A549 (cell line): ENCODE measurements at regions of chr2 and their contacts with region 1.

Region 1: DNA sequence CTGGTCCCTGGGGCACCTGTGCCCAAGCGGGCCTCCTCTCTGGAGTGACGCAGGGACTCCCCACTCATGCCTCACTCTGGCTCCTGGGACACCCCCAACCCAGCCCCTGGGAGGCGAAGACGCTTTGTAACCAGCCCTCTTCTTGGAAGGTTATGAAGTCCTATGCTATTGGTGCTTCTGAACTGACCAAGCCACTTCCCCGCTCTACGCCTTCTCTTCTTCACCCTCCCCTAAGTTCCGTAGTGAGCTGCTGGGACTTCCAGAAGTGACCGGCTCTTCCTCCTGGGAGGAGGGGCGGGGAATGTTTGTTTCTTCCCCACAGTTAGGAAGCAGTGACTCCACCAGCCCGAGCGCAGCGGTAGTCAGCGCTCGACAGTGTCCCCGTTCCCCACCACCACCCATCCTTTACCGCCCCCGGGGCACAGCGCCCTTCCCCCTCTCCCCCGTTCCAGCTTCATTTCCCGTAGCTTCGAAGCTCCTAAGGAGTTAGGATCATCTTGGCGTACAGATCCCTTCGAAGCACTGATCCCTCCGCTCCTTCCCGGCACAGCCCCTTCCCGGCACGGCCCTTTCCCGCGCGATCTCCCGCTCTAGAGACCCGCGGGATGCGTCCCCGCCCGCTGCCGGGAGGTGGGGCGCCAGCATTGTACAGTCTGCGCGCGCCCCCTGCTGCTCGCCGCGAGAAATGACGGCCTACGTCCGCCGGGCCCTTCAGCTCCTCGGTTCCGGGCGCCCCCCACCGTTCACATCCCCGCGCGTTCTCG is 25.3 kb upstream of the NOTO start:
- DNase-seq: peak; percentile 87 to 95
- ATAC-seq: peak; percentile 86 to 96
- H3K4me3 ChIP-seq: peak overlapping the region; percentile 50
- H3K27ac ChIP-seq: peak overlapping the region; percentile 67 to 86
- H3K4me1 ChIP-seq: peaks cover 11% of the 10 kb centered on the region
- CTCF ChIP-seq: peak; percentile 99
- EP300 ChIP-seq: no peak
- POLR2A ChIP-seq: 0 out of 2 replicates have a peak, but pooled peaks have one; percentile 18
- RAD21 ChIP-seq: peak; percentile 90 to 98

Region 2: DNA sequence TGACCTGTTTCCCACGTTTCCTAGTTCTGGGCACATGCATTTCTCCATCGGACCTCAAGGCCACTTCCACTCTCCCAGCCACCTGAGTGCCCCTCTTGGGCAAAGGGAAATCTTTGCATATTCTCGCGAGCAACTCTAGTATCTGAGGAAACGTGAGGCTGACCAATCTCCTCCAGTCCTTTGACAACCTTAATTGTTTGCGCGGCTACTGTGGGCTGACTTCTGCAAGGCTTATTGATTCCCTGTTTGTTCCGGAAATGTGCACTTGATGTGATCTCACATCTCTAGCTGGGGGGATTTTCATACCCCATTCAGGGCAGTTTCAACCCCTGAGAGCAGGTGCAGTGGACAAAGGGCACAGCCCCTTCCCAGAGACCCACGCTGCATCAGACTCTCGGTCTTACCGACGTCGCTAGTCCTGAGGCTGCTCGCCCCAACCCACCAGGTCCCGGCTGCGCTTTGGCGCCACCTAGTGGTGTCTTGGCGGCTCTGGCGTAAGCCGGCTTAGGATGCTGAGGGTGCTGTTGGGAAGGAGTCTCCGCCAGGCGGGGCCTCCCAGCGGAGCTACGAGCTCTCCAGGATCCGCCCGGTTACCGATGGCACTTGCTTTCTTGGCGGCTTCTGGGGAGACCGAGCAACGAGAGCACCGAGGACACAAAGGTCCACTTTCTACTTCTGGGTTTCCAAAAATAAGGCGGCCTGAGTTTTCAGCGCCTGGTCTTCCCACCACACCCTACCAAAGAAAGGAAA is 314.6 kb before region 1 on chr2:
- CTCF ChIA-PET with region 1: interaction called, 10 read pairs
- POLR2A ChIA-PET with region 1: no interaction called
- DNase-seq: peak; percentile 93 to 97
- ATAC-seq: peak; percentile 97 to 99
- H3K4me3 ChIP-seq: peak overlapping the region; percentile 41
- H3K27ac ChIP-seq: peak overlapping the region; percentile 12 to 58; a peak in 2 of 6 replicates
- H3K4me1 ChIP-seq: peaks cover 10% of the 10 kb centered on the region; the same call in 2 of the 3 replicates
- CTCF ChIP-seq: peak; percentile 99
- EP300 ChIP-seq: no peak
- POLR2A ChIP-seq: no peak
- RAD21 ChIP-seq: peak; percentile 88

Region 3: GRCh38 chr2:72963423-72964145 is 213.5 kb before region 1 on chr2:
- CTCF ChIA-PET with region 1: interaction called, 10 read pairs
- POLR2A ChIA-PET with region 1: no interaction called
- DNase-seq: no peak
- ATAC-seq: peak in 1 of 2 experiments; percentile 19; a peak in 3 of 6 replicates
- H3K4me3 ChIP-seq: no peak overlapping the region
- H3K27ac ChIP-seq: no peak overlapping the region
- H3K4me1 ChIP-seq: no peaks in the 10 kb centered on the region
- CTCF ChIP-seq: no peak
- EP300 ChIP-seq: no peak
- POLR2A ChIP-seq: no peak
- RAD21 ChIP-seq: no peak

Region 4: GRCh38 chr2:72999729-73000725 is 177.0 kb before region 1 on chr2:
- CTCF ChIA-PET with region 1: interaction called, 39 read pairs
- POLR2A ChIA-PET with region 1: no interaction called
- DNase-seq: no peak
- ATAC-seq: peak in 1 of 2 experiments; percentile 28; a peak in 1 of 6 replicates
- H3K4me3 ChIP-seq: no peak overlapping the region
- H3K27ac ChIP-seq: peak overlapping the region in 1 of 2 experiments; percentile 47; a peak in 2 of 6 replicates
- H3K4me1 ChIP-seq: peaks cover 18% of the 10 kb centered on the region
- CTCF ChIP-seq: no peak
- EP300 ChIP-seq: no peak
- POLR2A ChIP-seq: no peak
- RAD21 ChIP-seq: no peak

Region 5: GRCh38 chr2:73156539-73157124 is 20.4 kb before region 1 on chr2:
- CTCF ChIA-PET with region 1: interaction called, 60 read pairs
- POLR2A ChIA-PET with region 1: no interaction called
- DNase-seq: peak; percentile 58 to 69
- ATAC-seq: peak; percentile 96 to 98
- H3K4me3 ChIP-seq: 0 out of 3 replicates have a peak overlapping the region, but pooled peaks have one; percentile 5
- H3K27ac ChIP-seq: peak overlapping the region in 1 of 2 experiments; percentile 65; a peak in 2 of 6 replicates
- H3K4me1 ChIP-seq: peaks cover 4% of the 10 kb centered on the region; the same call in 1 of the 3 replicates
- CTCF ChIP-seq: peak; percentile 93
- EP300 ChIP-seq: no peak
- POLR2A ChIP-seq: no peak
- RAD21 ChIP-seq: peak; percentile 96 to 97

Region 6: GRCh38 chr2:73202156-73203054 is 25.3 kb after region 1 on chr2 and contains the start of gene NOTO:
- CTCF ChIA-PET with region 1: interaction called, 173 read pairs
- POLR2A ChIA-PET with region 1: no interaction called
- DNase-seq: no peak
- ATAC-seq: peak; percentile 66 to 71
- H3K4me3 ChIP-seq: peak within 1 kb of the TSS; percentile 41
- H3K27ac ChIP-seq: peak within 1 kb of the TSS in 1 of 2 experiments; percentile 46; a peak in 3 of 6 replicates
- H3K4me1 ChIP-seq: peaks cover 12% of the 10 kb centered on the region
- CTCF ChIP-seq: no peak
- EP300 ChIP-seq: no peak
- POLR2A ChIP-seq: no peak
- RAD21 ChIP-seq: no peak
- polyA plus RNA-seq, gene NOTO: not detected in 2 replicates

Region 7: DNA sequence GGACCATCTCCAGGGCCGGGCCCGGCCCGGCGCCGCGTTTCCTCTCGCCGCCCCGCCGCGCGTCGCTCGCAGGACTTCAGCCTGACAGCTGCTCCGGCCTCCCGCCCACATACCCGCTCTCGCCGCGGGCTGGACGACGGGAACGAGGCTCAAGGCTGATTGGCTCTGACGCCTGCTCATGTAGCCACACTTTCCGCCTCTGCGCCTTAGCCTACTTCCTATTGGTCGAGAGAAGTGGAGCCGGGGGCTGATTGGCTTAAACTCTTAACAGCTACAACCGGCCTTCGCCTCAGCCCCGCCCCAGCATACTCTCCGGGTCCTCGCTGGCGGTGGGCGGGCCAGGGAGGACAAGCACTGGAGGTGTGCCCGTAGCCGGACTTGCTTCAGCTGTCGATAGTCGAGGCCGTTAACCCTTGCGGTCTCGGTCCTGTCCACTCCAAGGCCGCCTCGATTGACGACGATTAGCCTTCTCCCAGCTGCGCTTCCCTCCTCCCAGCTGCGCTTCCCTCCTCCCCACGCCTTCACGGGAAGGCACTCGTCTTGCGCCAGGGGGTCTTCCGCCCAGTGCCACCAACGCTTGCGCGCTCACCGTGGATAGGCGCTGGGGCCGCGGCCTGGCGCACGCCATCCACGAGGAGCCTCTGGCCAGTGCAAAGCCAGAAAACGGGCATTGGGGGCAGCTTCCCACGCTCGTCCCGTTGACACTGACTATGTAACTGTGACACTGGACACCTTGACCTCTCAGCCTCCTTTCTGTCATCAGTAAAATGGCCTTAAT is 56.3 kb after region 1 on chr2 and contains the start of gene PRADC1:
- CTCF ChIA-PET with region 1: interaction called, 17 read pairs
- POLR2A ChIA-PET with region 1: interaction called, 3 read pairs
- DNase-seq: peak; percentile 99 to 100
- ATAC-seq: peak; percentile 84 to 95
- H3K4me3 ChIP-seq: peak within 1 kb of the TSS; percentile 64
- H3K27ac ChIP-seq: peak within 1 kb of the TSS; percentile 85 to 92
- H3K4me1 ChIP-seq: peaks cover 24% of the 10 kb centered on the region
- CTCF ChIP-seq: no peak
- EP300 ChIP-seq: no peak
- POLR2A ChIP-seq: peak; percentile 75
- RAD21 ChIP-seq: no peak
- polyA plus RNA-seq, gene PRADC1: 9.5 and 11.2 TPM in 2 replicates